ENCODE measurements at regions of chr16 and their contacts with region 1.

Region 1: GRCh38 chr16:58678716-58679115 is 5.9 kb downstream of the SLC38A7 start:
- DNase-seq: no peak

Region 2: GRCh38 chr16:58755989-58756649 is 77.4 kb after region 1 on chr16:
- intact Hi-C with region 1: loop called (anchors 1 kb)
- DNase-seq: peak; percentile 78

Measured in cardiac septum (tissue), 1 donor.